ENCODE measurements at regions of chr9 and their contacts with region 1.

Region 1: DNA sequence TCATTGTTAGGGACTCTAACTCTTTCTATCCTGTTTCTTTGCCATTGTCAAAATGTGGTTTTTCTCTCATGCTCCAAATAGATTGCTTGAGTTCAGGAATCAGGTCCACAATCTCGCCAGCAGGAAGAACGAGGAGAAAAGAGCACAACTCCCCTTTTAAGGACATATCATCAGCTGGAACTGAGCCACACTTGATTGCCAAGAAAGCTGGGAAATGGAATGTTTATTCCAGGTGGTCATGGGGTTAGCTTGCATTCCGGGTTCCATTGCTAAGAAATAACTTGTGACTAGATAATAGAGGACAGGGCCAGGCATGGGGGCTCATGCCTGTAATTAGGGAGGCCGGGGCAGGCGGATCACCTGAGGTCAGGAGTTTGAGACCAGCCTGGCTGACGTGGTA is 32.4 kb upstream of the C9orf57 start:
- DNase-seq: no peak
- H3K4me3 ChIP-seq: no peak overlapping the region
- CTCF ChIP-seq: no peak
- POLR2A ChIP-seq: no peak

Region 2: GRCh38 chr9:72013292-72013760 is 79.5 kb before region 1 on chr9:
- intact Hi-C with region 1: no loop called
- DNase-seq: no peak
- H3K4me3 ChIP-seq: no peak overlapping the region
- CTCF ChIP-seq: no peak
- POLR2A ChIP-seq: no peak

Region 3: DNA sequence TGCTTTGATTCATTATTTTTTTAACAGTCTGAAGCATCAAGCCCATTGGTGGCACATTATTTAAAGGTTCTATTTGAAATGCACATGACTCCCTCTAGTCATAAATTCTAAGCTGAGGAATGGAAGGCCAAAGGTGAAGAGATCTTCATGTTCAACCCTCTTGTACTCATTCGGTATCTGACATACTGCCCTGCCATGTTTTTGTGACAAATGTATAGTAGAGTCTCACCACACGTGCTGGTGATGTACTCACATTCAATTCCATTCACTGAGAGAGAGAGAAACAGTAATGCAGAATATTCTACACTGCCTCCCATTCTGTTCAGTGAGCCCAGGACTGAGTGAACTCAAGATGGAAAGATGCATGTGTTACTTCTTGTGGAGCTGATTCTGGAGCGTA is 154.7 kb after region 1 on chr9:
- intact Hi-C with region 1: loop called (anchors 5 kb)
- DNase-seq: no peak
- H3K4me3 ChIP-seq: no peak overlapping the region
- CTCF ChIP-seq: no peak
- POLR2A ChIP-seq: no peak